Posterior cingulate gyrus (tissue), 11 donors: ENCODE measurements at regions of chr16 and their contacts with region 1.

Region 1: GRCh38 chr16:70553645-70554044 is 30.0 kb downstream of the SF3B3 start:
- DNase-seq: no peak

Region 2: DNA sequence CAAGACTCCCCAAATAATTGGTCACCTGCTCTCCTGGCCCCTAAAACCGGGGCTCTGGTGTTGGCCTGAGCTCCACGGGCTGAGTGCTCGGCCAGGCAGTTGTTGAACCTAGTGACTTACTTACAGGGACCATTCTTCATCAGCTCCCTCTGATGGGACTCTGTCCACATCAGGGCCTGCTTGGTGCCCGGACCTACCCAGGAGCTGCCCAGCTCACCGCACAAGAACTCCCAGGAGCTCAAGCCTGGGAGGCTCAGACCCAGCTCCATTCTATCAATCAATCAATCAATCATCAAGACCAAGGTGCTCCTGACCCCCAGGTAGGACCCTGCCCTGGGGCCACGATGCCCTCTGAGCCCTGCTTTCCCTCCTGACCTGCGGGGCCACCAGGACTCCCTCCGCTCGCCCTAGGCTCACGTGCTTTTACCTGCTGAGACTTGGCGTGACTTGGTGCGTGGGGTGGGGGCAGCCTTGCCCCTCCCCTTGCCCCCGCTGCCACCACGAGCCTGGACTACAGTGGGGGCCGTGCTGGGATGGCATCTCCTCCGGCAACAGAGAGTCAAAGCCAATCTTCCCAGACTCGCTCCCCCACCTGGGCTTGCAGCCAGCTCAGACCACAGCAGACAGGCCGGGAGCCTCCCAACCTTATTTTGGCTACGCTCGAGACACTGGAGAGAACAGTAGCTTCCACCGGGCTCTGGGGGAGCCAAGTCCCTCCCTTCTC is 108.4 kb after region 1 on chr16:
- intact Hi-C with region 1: loop called (anchors 10 kb)
- DNase-seq: peak in 4 of 10 donors; percentile 41 to 86 (median 84)